ENCODE measurements at regions of chr6 and their contacts with region 1.

Region 1: DNA sequence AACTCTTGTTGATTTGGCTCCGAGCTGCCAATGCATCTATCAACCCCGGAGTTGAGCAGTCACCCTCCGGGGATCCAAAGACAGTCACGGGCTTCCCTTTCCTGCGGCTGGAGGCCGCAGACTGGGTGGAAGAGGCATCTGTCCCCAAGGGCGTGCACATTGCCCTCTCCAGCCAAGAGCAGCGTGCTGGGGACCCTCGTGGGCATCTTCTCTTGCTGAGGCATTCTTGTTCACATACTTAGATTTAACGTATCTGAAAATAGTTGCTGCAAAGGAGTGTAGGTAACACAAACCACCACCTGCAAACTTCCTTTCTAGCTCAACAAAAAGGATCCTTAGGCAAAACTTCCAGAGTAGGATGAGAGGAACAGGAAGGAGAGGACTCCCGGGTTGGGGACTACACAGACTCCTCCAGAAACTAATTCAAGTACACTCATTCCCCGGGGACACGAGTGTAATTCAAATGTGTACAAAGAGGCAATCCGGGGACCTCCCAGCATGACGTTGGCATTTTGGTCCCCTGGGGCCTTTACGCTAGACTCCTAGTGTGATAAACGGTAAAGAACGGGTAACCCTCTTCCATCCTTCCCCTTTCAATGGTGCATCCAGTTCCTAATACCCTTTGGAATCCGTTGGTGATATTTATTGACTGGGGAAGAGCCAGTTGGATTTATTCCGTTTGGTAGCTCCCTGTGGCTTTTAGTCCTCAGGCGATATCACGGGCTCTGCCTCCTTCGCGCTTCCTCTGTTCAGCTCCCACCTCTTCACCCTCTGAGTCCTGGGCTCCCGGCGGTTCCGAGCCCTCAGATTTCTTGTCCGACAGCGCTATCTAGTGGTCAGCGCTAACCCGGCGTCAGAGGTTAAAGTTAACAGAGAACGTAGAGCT is 2.7 kb upstream of the COL12A1 start:
- DNase-seq: peak; percentile 84
- H3K4me3 Mint-ChIP-seq: peak overlapping the region; percentile 15
- H3K27ac Mint-ChIP-seq: no peak overlapping the region
- H3K4me1 Mint-ChIP-seq: peaks cover 29% of the 10 kb centered on the region
- H3K27me3 Mint-ChIP-seq: peaks cover 8% of the 10 kb centered on the region
- CTCF ChIP-seq: peak; percentile 83

Region 2: GRCh38 chr6:73732845-73733675 is 1475.5 kb before region 1 on chr6:
- CTCF ChIA-PET with region 1: interaction called, 33 read pairs
- POLR2A ChIA-PET with region 1: no interaction called
- intact Hi-C with region 1: no loop called
- DNase-seq: peak; percentile 87
- H3K4me3 Mint-ChIP-seq: no peak overlapping the region
- H3K27ac Mint-ChIP-seq: no peak overlapping the region
- H3K4me1 Mint-ChIP-seq: peaks cover 26% of the 10 kb centered on the region
- H3K27me3 Mint-ChIP-seq: no peaks in the 10 kb centered on the region
- CTCF ChIP-seq: peak; percentile 82

Region 3: DNA sequence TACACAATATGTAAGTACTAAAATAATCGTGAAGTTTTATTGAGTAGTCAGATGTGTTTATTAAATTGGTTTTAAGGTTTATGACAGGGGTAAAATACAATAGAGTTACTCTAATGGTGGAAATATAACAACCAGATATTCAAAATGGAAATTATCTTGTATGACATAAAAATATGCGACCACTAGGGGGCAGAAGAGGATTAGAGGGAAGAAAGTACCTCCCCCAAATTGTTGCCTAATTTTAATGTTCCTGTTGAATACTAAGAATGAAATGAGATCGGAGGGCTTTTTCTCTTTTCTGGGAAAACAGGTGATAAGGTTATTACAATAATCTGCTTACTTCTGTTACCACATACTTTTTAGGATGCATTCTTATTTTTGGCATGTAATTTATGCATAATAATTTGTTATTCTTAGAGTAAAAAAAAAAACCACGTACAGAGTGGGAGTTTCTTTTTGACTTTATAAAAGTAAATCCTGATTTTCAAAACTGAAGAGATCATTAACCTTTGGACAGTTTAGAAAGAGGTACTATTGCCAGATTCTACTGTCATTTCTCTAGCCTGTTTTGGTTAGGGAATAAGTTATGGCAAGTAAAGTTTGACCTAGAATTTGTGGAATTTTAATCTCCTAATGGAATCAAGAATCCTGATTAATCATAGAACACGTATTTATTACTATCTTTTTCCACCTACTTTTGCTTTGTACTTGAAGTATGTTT is 1353.4 kb before region 1 on chr6:
- CTCF ChIA-PET with region 1: interaction called, 59 read pairs
- POLR2A ChIA-PET with region 1: interaction called, 4 read pairs
- intact Hi-C with region 1: loop called (anchors 1 kb)
- DNase-seq: peak; percentile 77
- H3K4me3 Mint-ChIP-seq: no peak overlapping the region
- H3K27ac Mint-ChIP-seq: no peak overlapping the region
- H3K4me1 Mint-ChIP-seq: no peaks in the 10 kb centered on the region
- H3K27me3 Mint-ChIP-seq: no peaks in the 10 kb centered on the region
- CTCF ChIP-seq: peak; percentile 67

Region 4: GRCh38 chr6:74091136-74091793 is 1117.3 kb before region 1 on chr6:
- CTCF ChIA-PET with region 1: interaction called, 144 read pairs
- POLR2A ChIA-PET with region 1: interaction called, 8 read pairs
- intact Hi-C with region 1: loop called (anchors 2 kb)
- DNase-seq: peak; percentile 68
- H3K4me3 Mint-ChIP-seq: no peak overlapping the region
- H3K27ac Mint-ChIP-seq: no peak overlapping the region
- H3K4me1 Mint-ChIP-seq: no peaks in the 10 kb centered on the region
- H3K27me3 Mint-ChIP-seq: no peaks in the 10 kb centered on the region
- CTCF ChIP-seq: peak; percentile 62

Region 5: DNA sequence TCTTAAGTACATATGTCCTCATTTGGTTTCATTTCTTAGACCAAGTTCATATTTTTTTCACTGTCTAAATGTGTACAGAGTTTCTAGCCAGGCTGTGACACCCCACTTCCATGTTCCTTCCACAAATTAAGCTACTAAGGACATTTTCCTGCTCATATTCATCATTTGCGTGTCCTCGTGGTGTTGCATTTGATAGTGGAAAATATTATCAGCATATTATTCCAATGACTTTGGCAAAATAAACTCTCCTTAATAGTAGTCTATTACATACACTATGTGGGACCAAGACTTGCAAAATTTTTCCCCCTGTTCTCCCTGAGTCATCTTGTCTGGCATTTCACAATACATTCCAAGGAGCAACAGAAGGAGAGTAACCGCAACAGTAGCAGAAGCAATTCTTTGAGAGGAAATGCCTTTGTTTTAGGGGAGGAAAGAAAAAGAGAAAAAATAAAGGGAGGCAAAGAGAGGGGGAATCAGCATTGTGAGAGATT is 601.9 kb before region 1 on chr6:
- CTCF ChIA-PET with region 1: interaction called, 5 read pairs
- POLR2A ChIA-PET with region 1: no interaction called
- intact Hi-C with region 1: loop called (anchors 10 kb)
- DNase-seq: peak; percentile 94
- H3K4me3 Mint-ChIP-seq: peak overlapping the region; percentile 15
- H3K27ac Mint-ChIP-seq: peak overlapping the region; percentile 67
- H3K4me1 Mint-ChIP-seq: peaks cover 39% of the 10 kb centered on the region
- H3K27me3 Mint-ChIP-seq: no peaks in the 10 kb centered on the region
- CTCF ChIP-seq: no peak

Region 6: DNA sequence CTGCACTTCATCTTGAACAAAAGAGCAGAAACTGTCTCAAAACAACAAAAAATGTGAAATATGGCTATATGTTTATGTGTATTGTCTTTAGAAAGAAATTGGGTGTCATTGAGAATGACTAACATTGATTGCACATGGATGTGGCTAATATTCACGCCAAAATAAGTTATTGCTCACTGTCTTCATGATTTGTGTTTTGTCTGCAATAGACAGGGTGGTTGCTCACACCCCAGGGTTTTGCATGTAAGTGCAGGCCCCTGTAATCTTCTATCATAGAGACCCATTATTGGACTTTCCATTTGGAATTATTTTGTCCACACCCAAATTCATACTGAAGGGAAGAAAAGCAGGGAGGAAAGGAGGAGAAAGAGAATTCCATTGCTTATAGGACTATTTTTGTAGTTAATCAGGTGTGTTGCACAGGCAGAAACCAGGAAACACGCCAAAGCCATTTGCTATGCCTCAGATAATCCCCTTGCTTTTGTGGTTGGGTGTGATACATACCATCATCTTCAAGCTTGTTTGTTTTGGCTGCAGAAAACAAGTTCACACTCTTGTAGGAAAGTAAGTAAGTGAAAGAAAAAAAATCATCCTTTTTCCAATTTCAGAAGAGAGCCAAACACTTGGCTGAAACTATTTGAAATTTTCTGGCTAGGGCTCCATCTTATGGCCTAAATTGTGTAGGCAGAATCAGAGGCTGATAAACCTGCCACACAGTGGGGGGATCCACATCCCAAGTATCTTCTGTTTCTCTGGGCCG is 216.8 kb before region 1 on chr6:
- CTCF ChIA-PET with region 1: interaction called, 5 read pairs
- POLR2A ChIA-PET with region 1: interaction called, 15 read pairs
- intact Hi-C with region 1: loop called (anchors 2 kb)
- DNase-seq: peak; percentile 73
- H3K4me3 Mint-ChIP-seq: no peak overlapping the region
- H3K27ac Mint-ChIP-seq: peak overlapping the region; percentile 32
- H3K4me1 Mint-ChIP-seq: peaks cover 27% of the 10 kb centered on the region
- H3K27me3 Mint-ChIP-seq: no peaks in the 10 kb centered on the region
- CTCF ChIP-seq: peak; percentile 33

Region 7: DNA sequence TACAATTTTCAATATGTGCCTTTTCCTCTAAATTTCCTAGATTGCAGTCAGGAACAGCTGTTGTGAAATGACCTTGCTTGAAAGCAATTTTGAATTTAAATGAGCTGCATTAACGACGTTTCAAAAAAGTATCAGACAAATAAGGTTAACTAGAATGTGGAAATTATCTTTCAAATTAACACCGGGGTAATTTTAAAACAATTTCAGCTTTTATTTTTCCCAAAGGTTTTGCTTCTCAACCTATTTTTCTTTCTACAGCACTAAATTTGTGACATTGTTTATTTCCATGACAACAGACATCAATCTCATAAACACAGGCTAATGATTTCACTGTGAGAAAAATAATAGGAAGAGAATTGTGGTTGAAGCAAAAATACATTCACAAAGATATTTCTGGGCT is 41.2 kb before region 1 on chr6:
- CTCF ChIA-PET with region 1: no interaction called
- POLR2A ChIA-PET with region 1: no interaction called
- intact Hi-C with region 1: no loop called
- DNase-seq: no peak
- H3K4me3 Mint-ChIP-seq: no peak overlapping the region
- H3K27ac Mint-ChIP-seq: no peak overlapping the region
- H3K4me1 Mint-ChIP-seq: no peaks in the 10 kb centered on the region
- H3K27me3 Mint-ChIP-seq: no peaks in the 10 kb centered on the region
- CTCF ChIP-seq: no peak

Region 8: DNA sequence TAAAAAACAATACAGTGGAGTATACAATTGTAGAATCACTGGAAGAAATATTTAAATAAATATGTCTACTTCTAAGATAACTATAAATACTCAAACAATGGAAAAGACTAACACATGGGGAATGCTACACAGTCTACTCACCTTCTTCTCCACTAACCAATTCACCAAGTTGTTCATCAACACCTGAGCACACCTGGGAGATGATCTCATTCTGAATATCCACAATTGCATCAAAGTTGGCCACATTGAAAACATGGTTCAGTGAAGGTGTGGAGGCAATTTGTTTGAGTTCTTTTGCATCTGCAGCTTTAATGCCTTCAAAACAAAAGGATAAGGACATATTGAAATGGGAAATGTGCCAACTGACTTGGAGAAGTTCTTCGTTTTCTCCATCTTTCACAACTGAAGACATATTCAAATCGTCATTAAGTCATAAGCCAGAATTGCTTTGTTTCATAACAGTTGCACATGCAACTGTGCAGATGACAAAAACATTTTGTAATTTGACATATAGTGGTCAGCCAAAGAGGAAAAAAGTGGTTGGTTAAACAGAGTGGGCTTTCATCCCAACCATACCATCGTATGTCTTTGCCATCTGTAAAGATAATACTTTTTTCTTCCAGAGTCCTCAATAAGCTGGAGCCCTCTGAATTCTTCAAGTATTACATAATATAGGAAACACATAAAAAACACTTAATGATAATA is 20.2 kb before region 1 on chr6:
- CTCF ChIA-PET with region 1: no interaction called
- POLR2A ChIA-PET with region 1: no interaction called
- intact Hi-C with region 1: no loop called
- DNase-seq: no peak
- H3K4me3 Mint-ChIP-seq: no peak overlapping the region
- H3K27ac Mint-ChIP-seq: no peak overlapping the region
- H3K4me1 Mint-ChIP-seq: no peaks in the 10 kb centered on the region
- H3K27me3 Mint-ChIP-seq: no peaks in the 10 kb centered on the region
- CTCF ChIP-seq: no peak

Region 9: DNA sequence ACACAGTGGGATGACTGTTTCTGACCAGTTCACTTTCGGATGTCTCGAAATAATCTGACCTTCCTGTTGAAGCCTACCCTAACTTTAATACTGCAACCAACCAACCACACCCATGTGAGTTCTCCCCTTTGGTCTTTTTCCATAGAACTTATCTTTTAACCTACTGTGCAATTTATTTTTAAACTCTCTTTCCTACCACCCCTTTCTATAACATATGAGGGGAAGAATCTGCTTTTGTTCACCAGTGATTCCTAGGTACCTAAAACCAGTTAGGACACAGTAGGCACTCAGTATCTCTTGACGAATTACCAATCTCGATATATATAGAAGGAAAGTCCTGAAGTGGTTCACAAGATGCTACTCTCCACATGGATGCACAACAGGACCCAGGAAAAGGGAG is 28.1 kb after region 1 on chr6:
- CTCF ChIA-PET with region 1: interaction called, 31 read pairs
- POLR2A ChIA-PET with region 1: interaction called, 3 read pairs
- intact Hi-C with region 1: no loop called
- DNase-seq: no peak
- H3K4me3 Mint-ChIP-seq: no peak overlapping the region
- H3K27ac Mint-ChIP-seq: no peak overlapping the region
- H3K4me1 Mint-ChIP-seq: peaks cover 5% of the 10 kb centered on the region
- H3K27me3 Mint-ChIP-seq: no peaks in the 10 kb centered on the region
- CTCF ChIP-seq: no peak